Mammary epithelial cell (primary cell): ENCODE measurements at regions of chr17 and their contacts with region 1.

Region 1: DNA sequence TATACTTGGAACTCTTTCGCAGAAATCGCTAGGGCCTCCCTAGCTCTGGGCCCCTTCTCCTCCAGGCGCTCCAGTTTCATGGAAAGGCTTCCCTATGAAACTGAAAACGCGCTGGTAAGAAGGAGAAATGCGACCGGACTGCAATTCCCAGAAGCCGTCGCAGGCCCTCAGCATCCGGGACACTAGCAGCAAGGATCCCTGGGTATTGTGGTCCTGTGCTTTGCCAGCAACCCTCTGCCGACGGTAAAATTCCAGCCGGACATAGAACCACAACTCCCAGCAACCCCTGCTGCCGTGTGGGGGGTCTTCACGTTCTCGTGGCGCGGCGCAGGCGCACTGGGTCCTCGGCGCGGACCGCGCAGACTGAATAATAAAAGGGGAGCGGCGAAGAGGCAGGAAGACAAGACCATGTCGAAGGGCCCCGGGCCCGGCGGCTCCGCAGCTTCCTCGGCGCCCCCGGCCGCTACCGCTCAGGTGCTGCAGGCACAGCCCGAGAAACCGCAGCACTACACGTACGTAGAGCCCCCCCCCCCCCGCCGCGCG is at the start of gene UNK:
- DNase-seq: peak; percentile 98
- H3K4me3 ChIP-seq: peak within 1 kb of the TSS; percentile 57 to 81 (median 67)
- H3K27ac ChIP-seq: peak within 1 kb of the TSS; percentile 96
- H3K4me1 ChIP-seq: peaks cover 33% of the 10 kb centered on the region
- H3K27me3 ChIP-seq: no peaks in the 10 kb centered on the region
- CTCF ChIP-seq: no peak
- total RNA-seq, gene UNK: 15.2 to 15.8 TPM

Region 2: DNA sequence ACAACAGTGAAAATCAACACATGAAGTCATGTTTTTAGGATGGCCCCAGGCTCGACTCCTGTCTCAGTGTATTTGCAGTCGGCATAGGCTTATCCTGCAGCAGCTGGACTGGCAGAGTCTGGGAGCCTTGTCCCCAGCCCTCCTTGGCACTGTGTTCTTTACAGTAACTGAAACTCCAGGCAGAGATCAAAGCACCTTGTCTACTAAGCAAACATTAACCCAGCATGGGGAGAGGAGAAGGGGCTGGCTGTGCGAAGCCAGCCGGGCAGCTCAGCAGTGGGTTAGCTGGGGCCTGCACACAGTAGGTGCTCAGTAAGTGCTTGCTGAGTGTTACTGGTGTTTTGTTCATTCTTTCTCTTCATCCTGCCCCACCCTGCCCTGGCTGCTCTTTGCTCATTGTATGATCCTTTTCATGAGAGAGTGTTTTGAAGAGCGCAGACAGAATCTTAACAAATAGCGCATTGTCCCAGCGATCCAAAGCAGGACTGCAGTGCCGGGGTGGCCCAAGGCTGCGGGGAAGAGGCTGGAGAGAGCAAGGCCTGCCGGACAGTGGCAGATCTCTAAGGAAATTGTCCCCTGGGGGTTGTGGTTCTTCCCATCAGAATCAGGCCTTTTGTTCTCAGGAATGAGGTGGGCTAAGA is 86.8 kb before region 1 on chr17:
- CTCF ChIA-PET with region 1: no interaction called
- dilution Hi-C with region 1: loop called (anchors 5 kb)
- in situ Hi-C with region 1: no loop called
- intact Hi-C with region 1: no loop called
- DNase-seq: no peak
- H3K4me3 ChIP-seq: no peak overlapping the region
- H3K27ac ChIP-seq: peak overlapping the region; percentile 70
- H3K4me1 ChIP-seq: peaks cover 87% of the 10 kb centered on the region
- H3K27me3 ChIP-seq: no peaks in the 10 kb centered on the region
- CTCF ChIP-seq: no peak

Region 3: DNA sequence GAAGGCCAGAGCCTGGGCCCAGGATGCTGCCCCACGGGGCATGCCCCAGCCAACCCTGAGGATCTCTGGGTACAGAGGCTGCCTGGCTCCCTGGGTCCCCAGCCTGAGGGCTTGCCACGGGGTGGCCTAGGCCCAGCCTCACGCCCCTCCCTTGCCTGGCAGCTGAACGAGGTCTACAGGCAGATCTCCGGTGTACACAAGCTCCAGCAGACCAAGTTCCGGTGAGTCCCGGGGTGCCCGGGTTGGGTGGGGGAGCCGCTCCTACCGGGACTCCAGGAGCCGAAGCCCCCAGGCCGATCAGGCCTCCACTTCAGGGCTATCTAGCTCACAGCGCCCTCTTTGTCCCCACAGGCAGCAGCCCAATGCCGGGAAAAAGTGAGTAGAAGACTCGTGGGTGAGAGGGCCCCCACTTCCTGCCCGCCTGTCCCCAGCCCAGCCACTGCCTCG is 43.9 kb before region 1 on chr17:
- CTCF ChIA-PET with region 1: interaction called, 4 read pairs
- dilution Hi-C with region 1: loop called (anchors 5 kb)
- in situ Hi-C with region 1: no loop called
- intact Hi-C with region 1: no loop called
- DNase-seq: no peak
- H3K4me3 ChIP-seq: no peak overlapping the region
- H3K27ac ChIP-seq: no peak overlapping the region
- H3K4me1 ChIP-seq: no peaks in the 10 kb centered on the region
- H3K27me3 ChIP-seq: no peaks in the 10 kb centered on the region
- CTCF ChIP-seq: no peak

Region 4: DNA sequence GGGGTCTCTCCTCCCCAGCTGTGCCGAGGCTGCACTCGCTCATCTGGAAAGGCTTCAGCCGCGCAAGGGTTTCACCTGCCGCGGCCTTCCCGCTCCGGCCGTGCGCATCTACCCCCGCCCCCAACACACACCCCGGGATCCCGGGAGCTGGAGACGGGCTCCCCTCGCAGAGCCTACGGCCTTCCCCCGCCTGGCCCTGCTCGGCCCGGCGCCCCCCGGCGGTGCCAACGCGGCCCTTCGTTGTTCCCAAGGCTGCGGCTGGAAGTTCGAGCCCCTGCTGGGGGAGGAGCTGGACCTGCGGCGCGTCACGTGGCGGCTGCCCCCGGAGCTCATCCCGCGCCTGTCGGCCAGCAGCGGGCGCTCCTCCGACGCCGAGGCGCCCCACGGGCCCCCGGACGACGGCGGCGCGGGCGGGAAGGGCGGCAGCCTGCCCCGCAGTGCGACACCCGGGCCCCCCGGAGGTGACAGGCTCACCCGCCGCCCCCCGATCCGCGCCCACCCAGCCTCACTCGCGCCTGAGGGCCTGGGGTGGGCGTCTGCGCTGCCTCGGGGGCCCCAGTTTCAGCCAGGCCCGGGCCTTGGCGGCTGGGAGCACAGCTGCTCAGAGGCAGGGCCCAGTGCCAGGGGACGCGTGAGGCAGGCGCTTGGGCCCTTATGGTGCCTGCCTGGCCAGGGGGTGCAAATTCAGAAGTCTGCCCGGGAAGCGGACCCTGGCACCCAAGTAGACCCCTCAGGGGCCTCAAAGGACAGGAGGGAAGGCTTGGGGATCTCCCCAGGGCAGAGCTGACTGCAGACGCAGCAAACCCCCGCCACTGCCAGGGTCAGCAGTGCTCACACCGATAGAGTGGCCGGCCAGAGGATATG is 30.8 kb before region 1 on chr17:
- CTCF ChIA-PET with region 1: no interaction called
- dilution Hi-C with region 1: no loop called
- in situ Hi-C with region 1: no loop called
- intact Hi-C with region 1: no loop called
- DNase-seq: no peak
- H3K4me3 ChIP-seq: no peak overlapping the region
- H3K27ac ChIP-seq: no peak overlapping the region
- H3K4me1 ChIP-seq: peaks cover 11% of the 10 kb centered on the region
- H3K27me3 ChIP-seq: no peaks in the 10 kb centered on the region
- CTCF ChIP-seq: no peak

Region 5: GRCh38 chr17:75808905-75809715 is 24.6 kb after region 1 on chr17:
- CTCF ChIA-PET with region 1: no interaction called
- dilution Hi-C with region 1: no loop called
- in situ Hi-C with region 1: no loop called
- intact Hi-C with region 1: loop called (anchors 2 kb)
- DNase-seq: peak; percentile 86
- H3K4me3 ChIP-seq: no peak overlapping the region
- H3K27ac ChIP-seq: peak overlapping the region; percentile 60
- H3K4me1 ChIP-seq: peaks cover 18% of the 10 kb centered on the region
- H3K27me3 ChIP-seq: no peaks in the 10 kb centered on the region
- CTCF ChIP-seq: peak in 1 of 2 donors; percentile 7

Region 6: GRCh38 chr17:75822119-75822799 is 37.7 kb after region 1 on chr17:
- CTCF ChIA-PET with region 1: no interaction called
- dilution Hi-C with region 1: loop called (anchors 5 kb)
- in situ Hi-C with region 1: no loop called
- intact Hi-C with region 1: no loop called
- DNase-seq: no peak
- H3K4me3 ChIP-seq: no peak overlapping the region
- H3K27ac ChIP-seq: no peak overlapping the region
- H3K4me1 ChIP-seq: no peaks in the 10 kb centered on the region
- H3K27me3 ChIP-seq: no peaks in the 10 kb centered on the region
- CTCF ChIP-seq: no peak

Region 7: DNA sequence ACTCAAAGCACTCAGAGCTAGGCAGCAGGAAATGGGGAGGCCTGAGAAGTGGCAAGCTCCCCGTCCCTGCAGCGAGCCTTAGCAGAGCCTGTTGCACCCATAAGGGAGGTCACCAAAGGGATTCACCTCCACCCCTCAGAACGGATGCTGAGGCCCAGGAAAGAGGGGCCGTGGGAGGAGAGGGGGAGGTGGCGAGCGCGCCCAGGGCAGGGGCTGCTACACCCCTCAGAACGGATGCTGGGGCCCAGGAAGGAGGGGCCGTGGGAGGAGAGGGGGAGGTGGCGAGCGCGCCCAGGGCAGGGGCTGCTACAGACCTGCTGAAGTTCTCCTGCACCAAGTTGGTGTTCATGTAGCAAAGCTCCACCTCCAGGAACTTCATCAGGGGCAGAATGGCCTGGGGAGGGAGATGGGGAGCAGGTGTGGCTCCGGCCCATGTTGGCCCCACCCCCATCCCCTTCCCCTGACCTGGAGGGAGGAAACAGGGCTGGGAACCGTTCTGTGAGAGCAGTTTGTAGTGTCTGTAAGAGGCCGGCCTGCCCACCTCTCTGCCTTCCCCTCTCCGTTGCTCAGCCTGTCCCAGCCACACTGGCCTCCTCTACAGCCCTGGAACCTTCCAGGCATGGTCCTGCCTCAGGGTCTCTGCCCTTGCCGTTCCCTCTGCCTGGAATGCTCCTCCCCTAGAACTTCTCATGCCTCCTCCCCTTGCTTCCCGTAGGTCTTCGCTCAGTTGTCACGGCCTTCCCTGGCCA is 48.3 kb after region 1 on chr17:
- CTCF ChIA-PET with region 1: no interaction called
- dilution Hi-C with region 1: no loop called
- in situ Hi-C with region 1: no loop called
- intact Hi-C with region 1: no loop called
- DNase-seq: no peak
- H3K4me3 ChIP-seq: no peak overlapping the region
- H3K27ac ChIP-seq: no peak overlapping the region
- H3K4me1 ChIP-seq: no peaks in the 10 kb centered on the region
- H3K27me3 ChIP-seq: no peaks in the 10 kb centered on the region
- CTCF ChIP-seq: no peak

Region 8: GRCh38 chr17:75940724-75941441 is 156.3 kb after region 1 on chr17 and contains the start of gene FBF1:
- CTCF ChIA-PET with region 1: no interaction called
- dilution Hi-C with region 1: no loop called
- in situ Hi-C with region 1: no loop called
- intact Hi-C with region 1: no loop called
- DNase-seq: peak; percentile 96
- H3K4me3 ChIP-seq: peak within 1 kb of the TSS; percentile 73 to 93 (median 87)
- H3K27ac ChIP-seq: peak within 1 kb of the TSS; percentile 60
- H3K4me1 ChIP-seq: peaks cover 3% of the 10 kb centered on the region
- H3K27me3 ChIP-seq: no peaks in the 10 kb centered on the region
- CTCF ChIP-seq: no peak
- total RNA-seq, gene FBF1: 12.0 to 13.5 TPM